CD8-positive, alpha-beta memory T cell (primary cell): ENCODE measurements at regions of chr18 and their contacts with region 1.

Region 1: DNA sequence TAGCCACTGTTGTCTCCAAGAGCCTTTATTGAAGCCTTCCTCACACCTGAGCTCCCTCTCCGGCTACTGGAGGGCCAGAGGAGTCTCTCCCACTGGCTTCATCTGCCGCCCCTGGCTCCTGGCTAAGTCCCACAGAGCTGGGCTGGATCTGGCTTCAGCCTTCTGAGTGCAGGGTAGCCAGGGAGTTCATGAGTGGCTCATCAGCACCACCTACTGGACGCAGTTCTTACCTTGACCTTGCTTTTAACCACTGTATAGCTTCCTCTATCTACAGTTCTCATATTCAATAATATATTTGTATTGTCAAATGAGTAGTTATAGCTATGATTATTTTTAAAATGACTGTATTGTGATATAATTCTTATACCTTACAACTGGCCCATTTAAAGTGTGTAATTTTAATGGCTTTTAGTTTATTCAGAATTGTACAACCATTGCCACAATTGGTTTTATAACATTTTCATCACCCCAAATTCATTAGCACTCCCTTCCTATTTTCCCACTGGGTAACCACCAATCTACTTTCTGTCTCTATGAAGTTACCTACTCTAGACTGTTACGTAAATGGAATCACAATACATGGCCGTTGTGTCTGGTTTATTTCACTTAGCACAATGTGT is 17.7 kb downstream of the CNDP1 start:
- DNase-seq: peak; percentile 52 to 76 (median 63)
- H3K4me3 ChIP-seq: no peak overlapping the region
- H3K4me3 Mint-ChIP-seq: no peak overlapping the region
- H3K27ac ChIP-seq: no peak overlapping the region
- H3K27ac Mint-ChIP-seq: peak overlapping the region in 1 of 8 donors; percentile 65
- H3K4me1 ChIP-seq: no peaks in the 10 kb centered on the region
- H3K4me1 Mint-ChIP-seq: peaks cover 0 to 2% (median 0%) of the 10 kb centered on the region in 3 donors
- H3K27me3 ChIP-seq: no peaks in the 10 kb centered on the region
- H3K27me3 Mint-ChIP-seq: peaks cover 12 to 16% of the 10 kb centered on the region in 2 donors

Region 2: DNA sequence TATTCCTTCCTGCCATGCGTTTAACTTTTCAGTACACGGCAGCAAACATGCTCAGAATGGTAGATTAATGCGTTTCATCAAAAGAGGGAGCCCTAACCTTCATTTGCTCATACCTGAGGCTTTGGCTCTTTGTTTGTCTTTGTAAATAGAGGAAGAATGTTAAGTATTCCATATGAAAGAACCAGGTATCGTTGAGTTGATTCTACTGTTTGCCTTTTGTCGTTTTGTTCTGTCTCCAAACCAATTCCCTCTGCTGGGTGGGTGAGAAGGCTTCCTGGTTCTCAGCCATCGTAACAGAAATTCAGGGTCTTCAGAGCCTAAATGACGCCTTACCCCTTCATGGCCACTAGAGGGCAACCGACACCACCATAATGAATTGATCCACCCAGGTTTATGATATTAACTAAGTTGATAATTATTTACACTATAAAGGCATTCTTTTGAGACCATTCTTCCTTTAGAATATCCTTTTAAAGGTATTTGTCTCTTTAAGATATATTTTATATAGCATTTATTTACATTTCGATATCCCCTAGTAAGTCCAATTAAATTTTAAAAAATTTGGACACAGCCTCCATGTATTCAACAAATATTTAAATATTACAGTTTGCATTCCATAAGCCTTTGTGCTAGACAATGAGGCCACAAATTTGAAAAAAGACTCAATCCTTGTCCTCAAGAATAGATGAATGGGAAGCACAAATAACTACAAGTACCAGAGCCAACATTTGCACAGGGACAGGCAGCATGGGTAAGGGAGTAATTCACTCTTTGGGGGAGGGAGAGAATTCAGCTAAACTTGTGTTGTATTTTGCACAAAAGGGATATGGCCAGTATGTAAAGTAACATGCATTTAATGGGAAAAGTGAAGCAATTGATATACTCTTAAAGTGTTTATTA is 355.6 kb before region 1 on chr18:
- CTCF ChIA-PET with region 1: interaction called, 22 read pairs
- POLR2A ChIA-PET with region 1: no interaction called
- DNase-seq: peak; percentile 13 to 74 (median 58)
- H3K4me3 ChIP-seq: peak overlapping the region; percentile 18
- H3K4me3 Mint-ChIP-seq: peak overlapping the region; percentile 34 to 87 (median 79)
- H3K27ac ChIP-seq: no peak overlapping the region
- H3K27ac Mint-ChIP-seq: peak overlapping the region in 7 of 8 donors; percentile 68 to 96 (median 81)
- H3K4me1 ChIP-seq: no peaks in the 10 kb centered on the region
- H3K4me1 Mint-ChIP-seq: peaks cover 0 to 6% (median 3%) of the 10 kb centered on the region in 3 donors
- H3K27me3 ChIP-seq: no peaks in the 10 kb centered on the region
- H3K27me3 Mint-ChIP-seq: peaks cover 1 to 23% of the 10 kb centered on the region in 2 donors

Region 3: GRCh38 chr18:74353169-74353775 is 198.8 kb before region 1 on chr18:
- CTCF ChIA-PET with region 1: interaction called, 33 read pairs
- POLR2A ChIA-PET with region 1: interaction called, 9 read pairs
- DNase-seq: peak; percentile 21 to 72 (median 40)
- H3K4me3 ChIP-seq: no peak overlapping the region
- H3K4me3 Mint-ChIP-seq: no peak overlapping the region
- H3K27ac ChIP-seq: no peak overlapping the region
- H3K27ac Mint-ChIP-seq: no peak overlapping the region
- H3K4me1 ChIP-seq: peaks cover 4% of the 10 kb centered on the region
- H3K4me1 Mint-ChIP-seq: peaks cover 3 to 12% (median 9%) of the 10 kb centered on the region in 3 donors
- H3K27me3 ChIP-seq: no peaks in the 10 kb centered on the region
- H3K27me3 Mint-ChIP-seq: peaks cover 9 to 11% of the 10 kb centered on the region in 2 donors

Region 4: GRCh38 chr18:74540652-74541421 is 11.2 kb before region 1 on chr18:
- CTCF ChIA-PET with region 1: interaction called, 14 read pairs
- POLR2A ChIA-PET with region 1: no interaction called
- DNase-seq: peak in 1 of 5 donors; percentile 15
- H3K4me3 ChIP-seq: no peak overlapping the region
- H3K4me3 Mint-ChIP-seq: peak overlapping the region in 6 of 7 donors; percentile 17 to 69 (median 40)
- H3K27ac ChIP-seq: no peak overlapping the region
- H3K27ac Mint-ChIP-seq: peak overlapping the region in 3 of 8 donors; percentile 18 to 75 (median 22)
- H3K4me1 ChIP-seq: no peaks in the 10 kb centered on the region
- H3K4me1 Mint-ChIP-seq: peaks cover 4 to 15% (median 14%) of the 10 kb centered on the region in 3 donors
- H3K27me3 ChIP-seq: no peaks in the 10 kb centered on the region
- H3K27me3 Mint-ChIP-seq: peaks cover 3 to 24% of the 10 kb centered on the region in 2 donors

Region 5: GRCh38 chr18:74563999-74564398 is 12.0 kb after region 1 on chr18:
- CTCF ChIA-PET with region 1: interaction called, 23 read pairs
- POLR2A ChIA-PET with region 1: no interaction called
- DNase-seq: no peak
- H3K4me3 ChIP-seq: no peak overlapping the region
- H3K4me3 Mint-ChIP-seq: no peak overlapping the region
- H3K27ac ChIP-seq: no peak overlapping the region
- H3K27ac Mint-ChIP-seq: no peak overlapping the region
- H3K4me1 ChIP-seq: no peaks in the 10 kb centered on the region
- H3K4me1 Mint-ChIP-seq: no peaks in the 10 kb centered on the region
- H3K27me3 ChIP-seq: no peaks in the 10 kb centered on the region
- H3K27me3 Mint-ChIP-seq: peaks cover 15 to 29% of the 10 kb centered on the region in 2 donors

Region 6: GRCh38 chr18:74702950-74703349 is 150.9 kb after region 1 on chr18:
- CTCF ChIA-PET with region 1: no interaction called
- POLR2A ChIA-PET with region 1: no interaction called
- DNase-seq: no peak
- H3K4me3 ChIP-seq: no peak overlapping the region
- H3K4me3 Mint-ChIP-seq: no peak overlapping the region
- H3K27ac ChIP-seq: no peak overlapping the region
- H3K27ac Mint-ChIP-seq: no peak overlapping the region
- H3K4me1 ChIP-seq: no peaks in the 10 kb centered on the region
- H3K4me1 Mint-ChIP-seq: peaks cover 0 to 7% (median 3%) of the 10 kb centered on the region in 3 donors
- H3K27me3 ChIP-seq: no peaks in the 10 kb centered on the region
- H3K27me3 Mint-ChIP-seq: no peaks in the 10 kb centered on the region